ENCODE measurements at regions of chr14 and their contacts with region 1.

Region 1: GRCh38 chr14:51283402-51284085 is 43.5 kb downstream of the TMX1 start:
- DNase-seq: no peak
- H3K4me3 ChIP-seq: no peak overlapping the region
- H3K27ac ChIP-seq: no peak overlapping the region
- H3K4me1 ChIP-seq: no peaks in the 10 kb centered on the region
- H3K27me3 ChIP-seq: no peaks in the 10 kb centered on the region
- CTCF ChIP-seq: peak; percentile 88

Region 2: GRCh38 chr14:51369814-51370213 is 86.3 kb after region 1 on chr14:
- intact Hi-C with region 1: loop called (anchors 10 kb)
- DNase-seq: no peak
- H3K4me3 ChIP-seq: no peak overlapping the region
- H3K27ac ChIP-seq: peak overlapping the region; percentile 56
- H3K4me1 ChIP-seq: peaks cover 5% of the 10 kb centered on the region
- H3K27me3 ChIP-seq: no peaks in the 10 kb centered on the region
- CTCF ChIP-seq: peak; percentile 44

Region 3: DNA sequence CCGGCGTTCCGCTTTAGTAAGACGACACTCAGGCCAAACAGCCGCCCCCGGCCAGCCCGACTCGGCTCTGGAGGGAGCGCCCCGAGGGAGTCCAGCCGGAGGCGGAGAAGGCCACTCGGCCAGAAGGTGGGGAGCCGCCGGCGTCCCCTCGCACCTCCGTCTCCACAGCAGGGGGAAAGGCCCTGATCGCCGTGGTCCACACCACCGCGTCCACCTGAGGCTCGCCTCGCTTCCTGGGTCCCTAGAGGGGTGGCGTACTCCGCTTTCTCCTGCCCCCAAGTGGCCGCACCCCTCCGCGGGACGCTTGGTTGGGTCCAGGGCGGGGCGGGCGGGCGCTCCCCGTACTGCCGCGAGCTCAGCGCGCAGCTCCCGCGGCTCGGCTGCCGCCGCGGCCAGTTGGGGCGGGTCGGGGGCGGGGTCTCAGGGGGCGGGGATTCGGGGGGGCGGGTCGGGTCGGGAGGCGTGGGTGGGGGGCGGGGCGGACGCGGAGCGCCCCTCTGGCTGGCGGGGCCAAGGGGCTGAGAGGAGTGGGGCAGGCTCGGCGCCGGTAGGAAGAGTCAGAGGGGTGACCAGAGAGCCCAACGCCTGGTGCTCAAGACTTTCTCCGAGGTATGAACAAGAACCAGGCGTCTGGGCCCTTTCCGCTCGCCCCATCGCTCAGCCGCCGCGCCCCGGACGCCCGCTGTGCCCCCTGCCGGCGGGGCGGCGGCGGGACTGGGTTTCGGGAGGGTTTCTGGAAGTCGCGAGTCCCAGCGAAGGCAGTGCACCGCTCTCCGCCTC is 368.0 kb after region 1 on chr14 and contains the start of gene FRMD6:
- intact Hi-C with region 1: loop called (anchors 10 kb)
- DNase-seq: peak; percentile 90
- H3K4me3 ChIP-seq: peak within 1 kb of the TSS; percentile 95
- H3K27ac ChIP-seq: peak within 1 kb of the TSS; percentile 91
- H3K4me1 ChIP-seq: peaks cover 57% of the 10 kb centered on the region
- H3K27me3 ChIP-seq: no peaks in the 10 kb centered on the region
- CTCF ChIP-seq: peak; percentile 89
- total RNA-seq, gene FRMD6: 7.7 TPM

Region 4: GRCh38 chr14:51780006-51780692 is 496.6 kb after region 1 on chr14:
- intact Hi-C with region 1: loop called (anchors 2 kb)
- DNase-seq: peak; percentile 67
- H3K4me3 ChIP-seq: no peak overlapping the region
- H3K27ac ChIP-seq: no peak overlapping the region
- H3K4me1 ChIP-seq: peaks cover 8% of the 10 kb centered on the region
- H3K27me3 ChIP-seq: peaks cover 28% of the 10 kb centered on the region
- CTCF ChIP-seq: peak; percentile 88

Measured in left ventricle myocardium inferior (tissue), 1 donor.